AG04449 (cell line): ENCODE measurements at regions of chrX and their contacts with region 1.

Region 1: GRCh38 chrX:66728818-66729271 is 90.0 kb upstream of the EDA2R start:
- DNase-seq: no peak
- H3K4me3 ChIP-seq: peak overlapping the region; percentile 70
- CTCF ChIP-seq: peak; percentile 52

Region 2: DNA sequence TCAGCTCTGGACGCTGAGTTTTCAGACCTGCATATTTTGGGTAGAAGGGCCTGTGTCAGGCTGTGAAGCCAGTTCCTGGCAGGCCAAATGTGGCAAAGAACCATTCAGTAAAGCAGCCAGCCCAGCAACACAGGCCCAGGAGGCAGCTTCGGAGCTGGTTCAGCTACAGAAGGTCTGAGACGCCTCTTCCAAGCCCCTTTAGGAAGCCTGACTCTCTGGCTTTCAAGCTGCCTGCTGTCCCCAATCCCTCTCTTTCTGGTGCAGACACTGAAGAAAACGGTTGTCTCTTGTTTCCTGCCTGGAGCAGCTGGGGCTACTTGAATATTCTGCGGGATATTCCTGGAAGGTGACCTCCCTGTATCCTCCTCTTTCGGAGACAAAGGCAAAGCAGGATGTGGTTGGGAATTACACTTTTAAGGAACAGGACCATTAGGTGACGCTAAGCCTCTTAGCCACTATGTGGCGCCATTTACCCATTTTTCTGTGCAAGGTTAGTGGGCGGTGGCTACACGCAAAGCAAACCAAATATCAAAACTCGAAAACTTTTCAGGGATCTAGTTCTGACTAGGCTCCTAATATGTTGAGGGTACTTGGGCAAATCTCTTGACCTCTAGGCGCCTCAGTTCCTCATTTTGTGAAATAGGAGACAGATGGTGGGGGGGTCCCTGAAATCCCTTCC is 1147.0 kb before region 1 on chrX:
- CTCF ChIA-PET with region 1: interaction called, 10 read pairs
- POLR2A ChIA-PET with region 1: no interaction called
- DNase-seq: no peak
- H3K4me3 ChIP-seq: no peak overlapping the region
- CTCF ChIP-seq: peak; percentile 51

Region 3: DNA sequence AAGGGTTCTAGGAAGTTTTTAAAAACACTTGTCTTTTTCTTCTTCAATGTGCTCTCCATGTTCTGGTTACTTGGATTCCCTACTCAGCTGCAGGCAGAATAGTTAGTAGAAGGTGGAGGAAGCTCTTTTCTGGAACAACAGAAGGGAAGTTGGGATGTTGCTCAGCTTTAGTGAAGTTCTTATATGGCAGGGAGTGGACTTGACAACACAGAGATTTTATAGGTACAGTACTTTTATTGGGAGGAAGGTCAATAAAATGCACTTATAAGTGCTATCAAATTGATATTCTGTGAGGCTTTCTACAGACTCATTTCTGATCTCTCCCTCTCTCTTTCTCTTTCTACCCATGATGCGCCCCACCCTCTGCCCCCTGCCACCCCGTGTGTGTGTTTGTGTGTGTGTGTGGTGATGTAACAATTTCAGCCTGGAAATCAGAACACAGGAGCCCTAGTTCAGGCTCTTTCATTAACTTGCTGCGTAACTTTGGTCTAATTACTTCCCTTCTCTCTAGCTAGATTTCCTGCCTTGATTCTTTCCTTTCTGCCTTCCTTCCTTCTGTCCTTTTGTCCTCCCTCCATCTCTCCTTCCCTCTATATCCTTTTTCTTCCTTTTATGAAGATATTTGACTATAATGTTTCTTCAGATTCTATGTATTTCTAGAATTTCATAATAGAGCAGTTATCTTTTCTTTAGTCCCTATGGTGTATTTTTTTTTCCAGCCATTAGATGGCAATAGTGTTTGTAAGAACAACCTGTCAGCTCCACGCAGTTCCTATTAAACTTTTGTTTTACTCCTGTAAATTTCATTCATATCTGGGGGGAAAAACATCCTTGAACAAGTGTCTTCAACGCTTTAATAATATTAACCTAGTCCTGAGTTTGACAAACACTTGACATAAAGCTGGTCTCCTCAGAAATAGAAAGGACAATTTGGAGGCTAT is 527.7 kb before region 1 on chrX:
- CTCF ChIA-PET with region 1: interaction called, 156 read pairs
- POLR2A ChIA-PET with region 1: no interaction called
- DNase-seq: no peak
- H3K4me3 ChIP-seq: no peak overlapping the region
- CTCF ChIP-seq: no peak

Region 4: DNA sequence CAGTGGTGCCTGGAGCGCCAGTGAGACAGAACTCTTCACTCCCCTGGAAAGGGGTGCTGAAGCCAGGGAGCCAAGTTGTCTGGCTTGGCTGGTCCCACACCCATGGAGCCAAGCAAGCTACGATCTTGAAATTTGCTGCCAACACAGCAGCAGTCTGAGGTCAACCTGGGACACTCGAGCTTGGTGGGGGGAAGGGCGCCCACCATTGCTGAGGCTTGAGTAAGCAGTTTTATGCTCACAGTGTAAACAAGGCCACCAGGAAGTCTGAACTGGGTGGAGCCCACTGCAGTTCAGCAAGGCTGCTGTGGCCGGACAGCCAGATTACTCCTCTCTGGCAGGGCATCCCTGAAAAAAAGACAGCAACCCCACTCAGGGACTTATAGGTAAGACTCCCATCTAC is 239.5 kb before region 1 on chrX:
- CTCF ChIA-PET with region 1: no interaction called
- POLR2A ChIA-PET with region 1: no interaction called
- DNase-seq: no peak
- H3K4me3 ChIP-seq: no peak overlapping the region
- CTCF ChIP-seq: no peak

Region 5: GRCh38 chrX:66717926-66718325 is 10.9 kb before region 1 on chrX:
- CTCF ChIA-PET with region 1: interaction called, 17 read pairs
- POLR2A ChIA-PET with region 1: no interaction called
- DNase-seq: no peak
- H3K4me3 ChIP-seq: no peak overlapping the region
- CTCF ChIP-seq: no peak

Region 6: GRCh38 chrX:66750769-66751764 is 22.2 kb after region 1 on chrX:
- CTCF ChIA-PET with region 1: no interaction called
- POLR2A ChIA-PET with region 1: no interaction called
- DNase-seq: no peak
- H3K4me3 ChIP-seq: no peak overlapping the region
- CTCF ChIP-seq: no peak